Left lung (tissue), 14 donors: ENCODE measurements at regions of chr5 and their contacts with region 1.

Region 1: GRCh38 chr5:39424736-39425637 is at the start of gene DAB2:
- DNase-seq: peak; percentile 84 to 94 (median 92)
- ATAC-seq: peak; percentile 81
- H3K4me3 ChIP-seq: peak within 1 kb of the TSS; percentile 53 to 55
- H3K27ac ChIP-seq: peak within 1 kb of the TSS; percentile 87 to 90
- H3K4me1 ChIP-seq: peaks cover 18 to 49% of the 10 kb centered on the region in 2 donors
- H3K27me3 ChIP-seq: peaks cover 0 to 10% of the 10 kb centered on the region in 2 donors
- CTCF ChIP-seq: peak; percentile 41 to 43
- polyA plus RNA-seq, gene DAB2: 96.8 to 139 (median 118) TPM

Region 2: GRCh38 chr5:39501397-39501796 is 76.4 kb after region 1 on chr5:
- intact Hi-C with region 1: loop called in 1 of 2 experiments (anchors 10 kb)
- DNase-seq: peak in 1 of 4 donors; percentile 54
- ATAC-seq: peak; percentile 65
- H3K4me3 ChIP-seq: no peak overlapping the region
- H3K27ac ChIP-seq: peak overlapping the region in 1 of 2 donors; percentile 51
- H3K4me1 ChIP-seq: peaks cover 13 to 22% of the 10 kb centered on the region in 2 donors
- H3K27me3 ChIP-seq: no peaks in the 10 kb centered on the region
- CTCF ChIP-seq: no peak

Region 3: DNA sequence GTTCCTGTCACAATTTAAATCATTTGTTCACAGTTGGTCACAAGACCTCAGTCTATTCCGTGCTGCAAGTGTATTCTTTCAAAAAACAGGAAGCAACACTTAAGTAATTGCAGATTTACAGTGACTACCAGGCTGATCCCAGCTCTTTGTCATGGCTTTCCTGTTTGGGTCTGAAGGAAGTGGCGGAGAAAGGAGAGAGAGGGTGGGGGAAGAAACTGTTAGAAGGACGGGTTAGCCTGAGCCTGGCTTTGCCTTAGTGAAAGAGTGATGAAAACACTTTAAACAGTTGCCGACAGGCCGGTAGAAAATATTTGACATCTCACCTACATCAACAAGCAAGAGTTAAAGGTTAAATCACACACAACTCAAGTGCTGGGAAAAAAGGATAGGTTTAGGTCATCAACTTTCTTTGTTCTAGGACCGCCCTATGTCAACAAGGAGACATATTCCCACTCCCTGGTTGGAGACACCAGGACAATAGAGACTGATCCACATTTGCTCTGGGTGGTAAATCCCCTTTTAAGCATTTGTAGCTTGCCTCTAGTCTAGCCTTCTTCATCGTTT is 102.0 kb after region 1 on chr5:
- intact Hi-C with region 1: no loop called
- DNase-seq: peak in 1 of 4 donors; percentile 40
- ATAC-seq: peak; percentile 80
- H3K4me3 ChIP-seq: no peak overlapping the region
- H3K27ac ChIP-seq: peak overlapping the region; percentile 36 to 86
- H3K4me1 ChIP-seq: peaks cover 0 to 16% of the 10 kb centered on the region in 2 donors
- H3K27me3 ChIP-seq: no peaks in the 10 kb centered on the region
- CTCF ChIP-seq: no peak